ENCODE measurements at regions of chr17 and their contacts with region 1.

Region 1: DNA sequence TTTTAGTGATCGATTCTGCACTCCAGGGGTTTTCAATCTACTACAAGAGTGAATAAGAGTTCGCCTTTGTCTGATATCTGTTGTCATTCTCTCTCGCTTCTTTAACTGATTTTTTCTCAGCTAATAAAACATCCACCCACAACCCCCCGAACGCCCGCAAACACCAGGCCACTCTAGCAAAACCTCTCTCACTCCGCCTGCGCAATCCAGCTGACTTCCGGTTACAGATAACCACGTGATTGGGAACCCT is 338 bp upstream of the RPL19 start:
- DNase-seq: peak; percentile 81
- ATAC-seq: peak; percentile 65
- H3K4me3 ChIP-seq: peak overlapping the region; percentile 95
- H3K27ac ChIP-seq: peak overlapping the region; percentile 100
- H3K4me1 ChIP-seq: peaks cover 27% of the 10 kb centered on the region
- H3K27me3 ChIP-seq: no peaks in the 10 kb centered on the region
- CTCF ChIP-seq: no peak
- EP300 ChIP-seq: no peak
- POLR2A ChIP-seq: no peak
- RAD21 ChIP-seq: no peak

Region 2: GRCh38 chr17:38444151-38444550 is 755.6 kb before region 1 on chr17:
- CTCF ChIA-PET with region 1: no interaction called
- POLR2A ChIA-PET with region 1: no interaction called
- RAD21 ChIA-PET with region 1: no interaction called
- SMC1A ChIA-PET with region 1: no interaction called
- in situ Hi-C with region 1: no loop called
- intact Hi-C with region 1: no loop called
- DNase-seq: no peak
- ATAC-seq: peak; percentile 94
- H3K4me3 ChIP-seq: no peak overlapping the region
- H3K27ac ChIP-seq: no peak overlapping the region
- H3K4me1 ChIP-seq: peaks cover 5% of the 10 kb centered on the region; the same call in 1 of the 2 replicates
- H3K27me3 ChIP-seq: no peaks in the 10 kb centered on the region
- CTCF ChIP-seq: peak; percentile 85 to 93 (median 89)
- EP300 ChIP-seq: no peak
- POLR2A ChIP-seq: no peak
- RAD21 ChIP-seq: peak; percentile 70

Region 3: GRCh38 chr17:39270923-39271322 is 71.2 kb after region 1 on chr17:
- CTCF ChIA-PET with region 1: no interaction called
- POLR2A ChIA-PET with region 1: interaction called, 10 read pairs
- RAD21 ChIA-PET with region 1: interaction called, 3 read pairs
- SMC1A ChIA-PET with region 1: no interaction called
- in situ Hi-C with region 1: no loop called
- intact Hi-C with region 1: no loop called
- DNase-seq: no peak
- ATAC-seq: no peak
- H3K4me3 ChIP-seq: no peak overlapping the region
- H3K27ac ChIP-seq: no peak overlapping the region
- H3K4me1 ChIP-seq: no peaks in the 10 kb centered on the region
- H3K27me3 ChIP-seq: no peaks in the 10 kb centered on the region
- CTCF ChIP-seq: peak in 2 of 3 experiments; percentile 24 to 35; a peak in 3 of 6 replicates
- EP300 ChIP-seq: no peak
- POLR2A ChIP-seq: no peak
- RAD21 ChIP-seq: peak; percentile 69